ENCODE measurements at regions of chr4 and their contacts with region 1.

Region 1: DNA sequence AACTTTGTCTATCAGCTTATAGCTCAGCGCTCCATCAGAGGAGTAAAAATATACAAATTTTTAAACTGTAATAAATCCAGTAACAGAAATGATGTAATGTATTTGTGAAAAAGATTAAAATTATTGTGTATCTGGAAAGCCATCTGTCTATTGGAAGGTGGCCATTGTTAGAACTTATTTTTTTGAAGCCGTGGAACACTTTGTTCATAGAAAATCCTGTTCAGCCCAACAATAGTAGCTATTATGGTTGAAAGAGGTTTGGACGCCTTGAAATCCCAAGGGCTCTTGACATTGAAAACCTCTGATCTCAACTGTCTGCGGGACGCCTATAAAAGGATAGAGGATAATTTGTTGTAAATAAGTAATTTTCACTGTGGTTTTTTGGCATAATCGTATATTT is 98.3 kb downstream of the RAPGEF2 start:
- DNase-seq: no peak
- ATAC-seq: no peak
- H3K4me3 ChIP-seq: no peak overlapping the region
- H3K4me3 Mint-ChIP-seq: no peak overlapping the region
- H3K27ac ChIP-seq: no peak overlapping the region
- H3K27ac Mint-ChIP-seq: no peak overlapping the region
- H3K4me1 ChIP-seq: peaks cover 8% of the 10 kb centered on the region in 2 donors
- H3K4me1 Mint-ChIP-seq: peaks cover 18% of the 10 kb centered on the region
- H3K27me3 ChIP-seq: no peaks in the 10 kb centered on the region
- H3K27me3 Mint-ChIP-seq: no peaks in the 10 kb centered on the region
- CTCF ChIP-seq: no peak

Region 2: DNA sequence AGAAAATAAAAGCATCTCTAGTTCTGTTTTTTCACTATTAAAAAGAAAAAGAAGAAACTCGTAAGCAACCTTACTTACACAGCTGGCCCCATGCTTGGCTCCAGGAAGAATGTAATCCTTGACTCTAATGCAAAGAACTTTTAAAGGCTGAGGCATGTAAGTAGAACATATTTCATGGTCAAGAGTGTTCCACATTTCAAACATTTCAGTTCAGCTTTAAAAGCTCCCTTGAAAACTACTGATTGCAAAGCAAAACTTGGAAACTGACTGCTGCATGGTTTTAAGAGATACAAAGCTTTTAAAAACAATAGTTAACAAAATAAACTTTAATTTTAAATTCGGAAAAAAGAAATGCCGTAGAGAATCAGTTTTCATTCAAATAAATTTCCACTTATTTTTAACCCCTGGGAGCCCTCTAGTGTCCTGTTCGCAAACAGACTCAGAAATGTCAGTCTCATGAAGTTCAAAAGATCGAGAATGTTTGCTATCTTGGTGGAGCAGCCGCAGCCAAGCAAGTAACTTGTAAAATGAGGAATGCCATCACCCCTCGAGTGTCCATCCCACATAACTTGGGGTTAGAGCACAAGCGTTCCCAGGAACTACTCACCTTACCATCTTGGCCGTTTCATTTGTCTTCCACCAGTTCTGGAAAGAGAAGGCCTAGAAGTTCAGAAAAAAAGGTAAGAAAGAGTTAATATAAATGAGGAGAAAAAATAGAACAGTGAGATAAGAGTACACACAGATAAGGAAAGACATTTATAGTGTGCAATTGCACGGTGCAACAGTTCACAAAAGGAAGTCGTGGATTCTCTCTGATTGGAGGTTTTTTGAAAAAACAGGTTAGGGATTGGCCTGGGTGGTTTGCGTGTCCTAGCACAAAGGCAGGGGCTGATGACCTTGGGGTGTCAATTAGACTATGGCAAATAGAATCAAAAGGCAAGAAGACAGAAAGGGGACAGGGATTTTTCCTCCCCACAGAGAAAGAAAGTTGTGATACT is 1028.6 kb before region 1 on chr4 and contains the start of gene GASK1B:
- CTCF ChIA-PET with region 1: no interaction called
- POLR2A ChIA-PET with region 1: no interaction called
- intact Hi-C with region 1: no loop called
- DNase-seq: no peak
- ATAC-seq: no peak
- H3K4me3 ChIP-seq: no peak within 1 kb of the TSS
- H3K4me3 Mint-ChIP-seq: no peak within 1 kb of the TSS
- H3K27ac ChIP-seq: no peak within 1 kb of the TSS
- H3K27ac Mint-ChIP-seq: no peak within 1 kb of the TSS
- H3K4me1 ChIP-seq: peaks cover 0 to 5% of the 10 kb centered on the region in 2 donors
- H3K4me1 Mint-ChIP-seq: peaks cover 3% of the 10 kb centered on the region
- H3K27me3 ChIP-seq: peaks cover 0 to 20% (median 9%) of the 10 kb centered on the region in 4 experiments
- H3K27me3 Mint-ChIP-seq: peaks cover 18% of the 10 kb centered on the region
- CTCF ChIP-seq: no peak
- total RNA-seq, gene GASK1B: 0.07 and 0.39 TPM in 2 replicates

Region 3: DNA sequence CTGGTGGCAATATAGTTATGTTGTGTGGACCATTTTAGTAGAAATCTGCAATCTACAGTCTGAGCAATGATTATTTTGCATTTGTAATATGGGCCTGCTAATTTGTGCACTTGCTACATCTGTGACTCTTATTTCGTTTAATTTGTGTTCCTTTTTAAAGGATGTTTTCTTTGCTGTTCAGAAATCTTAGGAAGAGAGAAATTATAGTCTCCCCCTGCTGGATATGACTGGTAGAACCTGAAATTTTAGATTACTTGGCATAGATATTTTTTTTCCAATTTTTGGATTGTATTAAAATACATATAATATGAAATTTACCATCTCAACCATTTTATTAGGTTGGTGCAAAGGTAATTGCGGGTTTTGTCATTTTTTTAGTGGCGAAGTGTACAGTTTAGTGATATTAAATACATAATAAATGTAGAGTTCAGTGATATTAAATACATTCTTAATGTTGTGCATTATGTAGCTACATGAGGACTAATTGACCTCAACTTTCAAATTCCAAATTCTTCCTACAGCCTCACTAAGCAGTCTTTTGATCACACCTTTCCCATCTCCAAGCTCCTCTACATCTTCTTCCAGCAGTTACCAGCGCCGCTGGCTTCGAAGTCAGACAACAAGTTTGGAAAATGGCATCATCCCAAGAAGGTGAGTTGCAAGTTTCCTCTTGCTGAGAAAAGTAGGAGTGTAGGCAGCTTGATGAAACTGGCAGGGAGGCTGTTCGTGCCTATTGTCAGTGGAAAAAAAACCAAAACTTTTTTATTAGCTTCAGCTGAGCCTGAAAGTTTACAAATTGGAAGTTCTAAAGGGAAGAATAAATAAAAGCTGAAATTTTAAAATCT is 350.1 kb before region 1 on chr4:
- CTCF ChIA-PET with region 1: interaction called, 96 read pairs
- POLR2A ChIA-PET with region 1: no interaction called
- intact Hi-C with region 1: no loop called
- DNase-seq: peak; percentile 44
- ATAC-seq: no peak
- H3K4me3 ChIP-seq: no peak overlapping the region
- H3K4me3 Mint-ChIP-seq: no peak overlapping the region
- H3K27ac ChIP-seq: no peak overlapping the region
- H3K27ac Mint-ChIP-seq: no peak overlapping the region
- H3K4me1 ChIP-seq: no peaks in the 10 kb centered on the region
- H3K4me1 Mint-ChIP-seq: no peaks in the 10 kb centered on the region
- H3K27me3 ChIP-seq: peaks cover 0 to 29% (median 19%) of the 10 kb centered on the region in 4 experiments
- H3K27me3 Mint-ChIP-seq: peaks cover 24% of the 10 kb centered on the region
- CTCF ChIP-seq: peak; percentile 89

Region 4: GRCh38 chr4:158856852-158857251 is 344.3 kb before region 1 on chr4:
- CTCF ChIA-PET with region 1: interaction called, 96 read pairs
- POLR2A ChIA-PET with region 1: no interaction called
- intact Hi-C with region 1: loop called (anchors 1 kb)
- DNase-seq: peak; percentile 63
- ATAC-seq: peak; percentile 65
- H3K4me3 ChIP-seq: no peak overlapping the region
- H3K4me3 Mint-ChIP-seq: no peak overlapping the region
- H3K27ac ChIP-seq: no peak overlapping the region
- H3K27ac Mint-ChIP-seq: no peak overlapping the region
- H3K4me1 ChIP-seq: no peaks in the 10 kb centered on the region
- H3K4me1 Mint-ChIP-seq: peaks cover 3% of the 10 kb centered on the region
- H3K27me3 ChIP-seq: peaks cover 0 to 4% (median 3%) of the 10 kb centered on the region in 4 experiments
- H3K27me3 Mint-ChIP-seq: peaks cover 13% of the 10 kb centered on the region
- CTCF ChIP-seq: peak; percentile 76

Region 5: GRCh38 chr4:159137176-159137575 is 64.0 kb before region 1 on chr4:
- CTCF ChIA-PET with region 1: no interaction called
- POLR2A ChIA-PET with region 1: no interaction called
- intact Hi-C with region 1: no loop called
- DNase-seq: no peak
- ATAC-seq: no peak
- H3K4me3 ChIP-seq: no peak overlapping the region
- H3K4me3 Mint-ChIP-seq: no peak overlapping the region
- H3K27ac ChIP-seq: no peak overlapping the region
- H3K27ac Mint-ChIP-seq: no peak overlapping the region
- H3K4me1 ChIP-seq: peaks cover 8 to 13% of the 10 kb centered on the region in 2 donors
- H3K4me1 Mint-ChIP-seq: peaks cover 35% of the 10 kb centered on the region
- H3K27me3 ChIP-seq: no peaks in the 10 kb centered on the region
- H3K27me3 Mint-ChIP-seq: no peaks in the 10 kb centered on the region
- CTCF ChIP-seq: no peak

Region 6: GRCh38 chr4:159212675-159213293 is 11.6 kb after region 1 on chr4:
- CTCF ChIA-PET with region 1: interaction called, 31 read pairs
- POLR2A ChIA-PET with region 1: no interaction called
- intact Hi-C with region 1: no loop called
- DNase-seq: no peak
- ATAC-seq: no peak
- H3K4me3 ChIP-seq: no peak overlapping the region
- H3K4me3 Mint-ChIP-seq: no peak overlapping the region
- H3K27ac ChIP-seq: no peak overlapping the region
- H3K27ac Mint-ChIP-seq: no peak overlapping the region
- H3K4me1 ChIP-seq: no peaks in the 10 kb centered on the region
- H3K4me1 Mint-ChIP-seq: no peaks in the 10 kb centered on the region
- H3K27me3 ChIP-seq: no peaks in the 10 kb centered on the region
- H3K27me3 Mint-ChIP-seq: no peaks in the 10 kb centered on the region
- CTCF ChIP-seq: no peak